ENCODE measurements at regions of chr17 and their contacts with region 1.

Region 1: DNA sequence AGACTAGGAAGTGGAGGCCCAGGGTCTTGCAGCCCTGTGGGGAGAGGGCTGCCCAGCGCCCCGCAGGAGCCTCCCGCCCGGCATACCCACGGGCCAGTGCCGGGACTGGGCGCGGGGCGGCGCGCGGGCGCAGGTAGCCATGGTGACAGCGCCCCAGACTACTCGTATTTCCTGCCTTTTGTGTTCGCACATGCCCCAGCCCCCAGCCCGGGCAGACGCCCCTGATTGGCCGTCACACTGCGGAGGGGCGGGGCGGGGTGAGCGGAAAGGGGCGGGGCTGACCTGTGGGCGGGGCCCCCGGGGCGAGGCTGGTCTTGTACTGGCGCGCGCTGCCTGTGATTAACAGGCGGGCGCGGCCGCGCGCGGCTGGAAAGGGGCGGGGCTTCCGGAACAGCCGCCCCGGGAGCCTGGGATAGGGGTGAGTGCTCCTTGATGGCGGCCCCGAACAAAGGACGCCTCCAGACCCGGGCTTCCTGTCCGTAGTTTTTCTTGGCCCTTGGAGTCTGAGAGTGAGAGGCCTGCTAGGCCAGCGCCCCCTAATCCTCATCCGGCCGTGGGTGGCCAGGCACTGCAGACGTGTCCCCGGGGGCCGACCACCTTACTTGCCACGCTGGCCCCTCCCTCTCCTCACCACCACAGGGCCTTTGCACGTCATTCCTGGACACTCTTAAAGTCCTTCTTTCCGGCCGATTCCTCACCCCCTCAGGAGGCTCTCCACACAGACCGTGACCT is 71.0 kb downstream of the RAI1 start:
- DNase-seq: peak; percentile 96
- ATAC-seq: peak; percentile 94 to 95

Region 2: GRCh38 chr17:17694169-17695081 is 57.8 kb before region 1 on chr17:
- intact Hi-C with region 1: loop called (anchors 10 kb)
- DNase-seq: peak; percentile 80
- ATAC-seq: peak; percentile 75 to 77

Measured in left cardiac atrium (tissue), 4 donors.